ENCODE measurements at regions of chr16 and their contacts with region 1.

Region 1: GRCh38 chr16:4253394-4254150 is 11.7 kb upstream of the SRL start:
- DNase-seq: peak; percentile 97
- ATAC-seq: peak; percentile 96
- H3K4me3 ChIP-seq: peak overlapping the region; percentile 48 to 77 (median 74); a peak in 5 of 6 replicates
- H3K27ac ChIP-seq: peak overlapping the region; percentile 69
- H3K4me1 ChIP-seq: 0 out of 2 replicates have a peak, but pooled peaks cover 6% of the 10 kb centered on the region
- H3K27me3 ChIP-seq: no peaks in the 10 kb centered on the region
- CTCF ChIP-seq: no peak; the same call in 1 of the 2 replicates
- EP300 ChIP-seq: no peak
- POLR2A ChIP-seq: peak; percentile 87
- RAD21 ChIP-seq: no peak; the same call in 1 of the 2 replicates

Region 2: GRCh38 chr16:2715519-2715918 is 1538.1 kb before region 1 on chr16:
- CTCF ChIA-PET with region 1: no interaction called
- POLR2A ChIA-PET with region 1: no interaction called
- in situ Hi-C with region 1: no loop called
- intact Hi-C with region 1: no loop called
- DNase-seq: no peak
- ATAC-seq: no peak
- H3K4me3 ChIP-seq: no peak overlapping the region
- H3K27ac ChIP-seq: no peak overlapping the region
- H3K4me1 ChIP-seq: peaks cover 18% of the 10 kb centered on the region
- H3K27me3 ChIP-seq: peaks cover 7 to 36% of the 10 kb centered on the region in 2 experiments
- CTCF ChIP-seq: no peak
- EP300 ChIP-seq: no peak
- POLR2A ChIP-seq: no peak
- RAD21 ChIP-seq: no peak

Region 3: DNA sequence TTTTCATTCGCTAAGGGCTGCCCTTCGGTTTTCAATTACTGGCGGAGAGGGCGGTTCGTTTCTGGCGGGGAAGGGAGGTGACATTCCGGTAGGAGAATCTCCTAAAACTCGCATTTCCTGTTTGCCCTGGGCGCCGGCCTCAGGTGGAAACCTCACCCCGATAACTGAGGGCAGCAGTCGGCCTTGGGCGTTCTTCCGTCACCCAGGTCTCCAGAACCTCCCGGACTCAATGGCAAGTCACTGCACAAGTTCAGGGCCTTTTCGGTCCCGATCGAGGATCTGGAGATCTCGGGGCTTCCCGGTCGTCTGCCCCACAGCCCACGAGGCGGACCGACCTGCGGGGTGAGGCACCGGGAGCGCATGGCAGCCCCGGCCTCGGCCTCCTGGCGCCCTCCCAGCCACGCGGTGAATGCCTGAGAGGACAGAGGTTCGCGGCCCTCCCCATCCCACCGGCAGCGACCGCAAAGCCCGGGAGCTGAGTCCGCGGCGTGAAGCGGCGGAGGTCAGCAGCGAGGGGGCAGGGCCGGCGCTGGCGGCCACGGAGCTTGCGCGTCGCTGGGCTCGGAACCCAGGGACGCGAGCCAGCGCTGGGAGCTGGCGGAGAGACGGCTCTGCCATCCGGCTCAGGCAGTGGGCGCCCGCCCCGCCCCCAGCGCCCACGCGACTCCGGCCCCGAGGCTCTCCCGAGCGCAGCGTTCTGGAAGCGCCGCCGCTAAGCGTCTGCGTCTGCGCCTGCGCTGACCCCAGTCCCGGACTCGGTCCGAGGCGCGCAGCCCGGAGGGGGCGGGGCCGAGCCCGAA is 70.1 kb before region 1 on chr16:
- CTCF ChIA-PET with region 1: no interaction called
- POLR2A ChIA-PET with region 1: interaction called, 15 read pairs
- in situ Hi-C with region 1: no loop called
- intact Hi-C with region 1: no loop called
- DNase-seq: peak; percentile 81
- ATAC-seq: peak; percentile 92
- H3K4me3 ChIP-seq: peak overlapping the region; percentile 68 to 78 (median 75)
- H3K27ac ChIP-seq: peak overlapping the region; percentile 76
- H3K4me1 ChIP-seq: peaks cover 15% of the 10 kb centered on the region
- H3K27me3 ChIP-seq: no peaks in the 10 kb centered on the region; a peak in 2 of 5 replicates
- CTCF ChIP-seq: no peak; the same call in 1 of the 2 replicates
- EP300 ChIP-seq: 0 out of 4 replicates have a peak, but pooled peaks of 1 of the 2 experiments have one; percentile 2
- POLR2A ChIP-seq: peak; percentile 38 to 75; a peak in 3 of 4 replicates
- RAD21 ChIP-seq: peak; percentile 61; the same call in 1 of the 2 replicates

Region 4: GRCh38 chr16:4200000-4200780 is 53.4 kb before region 1 on chr16:
- CTCF ChIA-PET with region 1: interaction called, 59 read pairs
- POLR2A ChIA-PET with region 1: interaction called, 16 read pairs
- in situ Hi-C with region 1: loop called (anchors 5 kb)
- intact Hi-C with region 1: loop called (anchors 2 kb)
- DNase-seq: peak; percentile 50
- ATAC-seq: peak; percentile 94
- H3K4me3 ChIP-seq: no peak overlapping the region
- H3K27ac ChIP-seq: no peak overlapping the region
- H3K4me1 ChIP-seq: peaks cover 5% of the 10 kb centered on the region; the same call in 1 of the 2 replicates
- H3K27me3 ChIP-seq: peaks cover 0 to 19% of the 10 kb centered on the region in 2 experiments; a peak in 1 of 5 replicates
- CTCF ChIP-seq: peak; percentile 95
- EP300 ChIP-seq: no peak
- POLR2A ChIP-seq: no peak
- RAD21 ChIP-seq: peak; percentile 92

Region 5: GRCh38 chr16:4214215-4214621 is 39.4 kb before region 1 on chr16:
- CTCF ChIA-PET with region 1: no interaction called
- POLR2A ChIA-PET with region 1: interaction called, 10 read pairs
- in situ Hi-C with region 1: no loop called
- intact Hi-C with region 1: no loop called
- DNase-seq: peak; percentile 55
- ATAC-seq: peak; percentile 22; the same call in 2 of the 3 replicates
- H3K4me3 ChIP-seq: no peak overlapping the region
- H3K27ac ChIP-seq: no peak overlapping the region
- H3K4me1 ChIP-seq: peaks cover 41% of the 10 kb centered on the region
- H3K27me3 ChIP-seq: peaks cover 5 to 31% of the 10 kb centered on the region in 2 experiments; a peak in 4 of 5 replicates
- CTCF ChIP-seq: no peak
- EP300 ChIP-seq: no peak
- POLR2A ChIP-seq: no peak
- RAD21 ChIP-seq: no peak

Measured in HepG2 (cell line).